ENCODE measurements at regions of chr11 and their contacts with region 1.

Region 1: DNA sequence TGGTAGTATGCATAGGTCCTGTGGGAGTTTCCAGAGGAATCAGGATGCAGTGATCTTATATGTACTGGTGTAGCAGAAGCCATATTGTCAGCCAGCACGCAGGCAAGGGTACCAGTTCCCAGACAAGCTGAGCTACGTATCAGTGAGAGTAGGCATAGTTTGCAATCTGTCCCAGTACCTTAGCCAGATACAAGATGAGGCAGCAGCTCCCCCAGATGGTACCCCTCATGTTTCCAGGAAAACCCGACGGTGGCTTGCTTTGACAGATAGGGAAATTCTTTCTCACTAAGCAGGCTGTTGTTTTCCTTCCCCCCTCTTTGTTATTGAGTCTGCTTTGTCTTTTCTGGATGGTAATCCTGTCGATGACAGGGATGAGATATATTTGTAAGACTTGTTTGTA is 109.7 kb upstream of the RRM1 start:
- DNase-seq: peak in 8 of 9 donors; percentile 23 to 55 (median 36)
- ATAC-seq: peak; percentile 69
- H3K4me3 ChIP-seq: no peak overlapping the region
- H3K4me3 Mint-ChIP-seq: peak overlapping the region in 8 of 10 donors; percentile 1 to 43 (median 3)
- H3K27ac ChIP-seq: peak overlapping the region; percentile 5
- H3K27ac Mint-ChIP-seq: peak overlapping the region in 8 of 9 donors; percentile 26 to 90 (median 82)
- H3K4me1 ChIP-seq: peaks cover 20 to 45% of the 10 kb centered on the region in 2 donors
- H3K4me1 Mint-ChIP-seq: peaks cover 53 to 99% (median 93%) of the 10 kb centered on the region in 7 donors
- H3K27me3 ChIP-seq: no peaks in the 10 kb centered on the region
- H3K27me3 Mint-ChIP-seq: no peaks in the 10 kb centered on the region

Region 2: DNA sequence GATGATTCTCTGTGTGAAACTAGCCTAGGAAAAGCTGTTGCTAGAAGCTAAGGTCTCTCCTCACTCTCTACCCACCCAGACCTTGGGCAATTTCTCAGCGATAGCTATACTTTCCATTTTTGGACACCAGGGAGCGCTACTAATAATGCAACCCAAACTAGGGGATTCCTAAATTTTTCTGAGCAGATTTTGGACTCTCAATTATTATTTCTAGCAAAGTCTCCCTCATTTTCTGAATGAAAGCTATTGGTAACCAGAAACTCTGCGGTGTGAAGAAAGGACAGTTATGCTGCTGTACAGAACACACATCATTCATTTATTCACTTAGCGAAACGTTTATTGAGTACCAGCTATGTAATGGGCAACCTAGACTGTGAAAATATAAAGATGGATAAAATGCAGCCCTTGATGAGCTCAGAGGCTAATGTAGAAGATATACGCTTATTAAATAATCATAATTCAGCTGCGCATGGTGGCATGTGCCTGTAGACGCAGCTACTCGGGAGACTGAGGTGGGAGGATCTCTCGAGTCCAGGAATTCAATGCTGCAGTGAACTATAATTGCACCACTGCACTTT is 135.5 kb before region 1 on chr11:
- CTCF ChIA-PET with region 1: interaction called, 45 read pairs
- POLR2A ChIA-PET with region 1: interaction called, 22 read pairs
- intact Hi-C with region 1: loop called (anchors 1 kb)
- DNase-seq: peak in 7 of 9 donors; percentile 45 to 72 (median 62)
- ATAC-seq: peak; percentile 82
- H3K4me3 ChIP-seq: no peak overlapping the region
- H3K4me3 Mint-ChIP-seq: no peak overlapping the region
- H3K27ac ChIP-seq: no peak overlapping the region
- H3K27ac Mint-ChIP-seq: peak overlapping the region in 8 of 9 donors; percentile 7 to 80 (median 62)
- H3K4me1 ChIP-seq: peaks cover 20 to 33% of the 10 kb centered on the region in 2 donors
- H3K4me1 Mint-ChIP-seq: peaks cover 28 to 61% (median 42%) of the 10 kb centered on the region in 7 donors
- H3K27me3 ChIP-seq: no peaks in the 10 kb centered on the region
- H3K27me3 Mint-ChIP-seq: no peaks in the 10 kb centered on the region

Region 3: GRCh38 chr11:3927133-3927796 is 57.6 kb before region 1 on chr11:
- CTCF ChIA-PET with region 1: interaction called, 6 read pairs
- POLR2A ChIA-PET with region 1: no interaction called
- intact Hi-C with region 1: loop called in 1 of 2 experiments (anchors 1 kb)
- DNase-seq: no peak
- ATAC-seq: no peak
- H3K4me3 ChIP-seq: no peak overlapping the region
- H3K4me3 Mint-ChIP-seq: no peak overlapping the region
- H3K27ac ChIP-seq: no peak overlapping the region
- H3K27ac Mint-ChIP-seq: peak overlapping the region in 7 of 9 donors; percentile 10 to 86 (median 52)
- H3K4me1 ChIP-seq: peaks cover 0 to 4% of the 10 kb centered on the region in 2 donors
- H3K4me1 Mint-ChIP-seq: peaks cover 23 to 61% (median 58%) of the 10 kb centered on the region in 7 donors
- H3K27me3 ChIP-seq: no peaks in the 10 kb centered on the region
- H3K27me3 Mint-ChIP-seq: no peaks in the 10 kb centered on the region

Region 4: GRCh38 chr11:3947061-3947460 is 37.8 kb before region 1 on chr11:
- CTCF ChIA-PET with region 1: interaction called, 7 read pairs
- POLR2A ChIA-PET with region 1: interaction called, 6 read pairs
- intact Hi-C with region 1: loop called (anchors 2 kb)
- DNase-seq: peak in 8 of 9 donors; percentile 36 to 86 (median 80)
- ATAC-seq: peak; percentile 88
- H3K4me3 ChIP-seq: peak overlapping the region; percentile 44
- H3K4me3 Mint-ChIP-seq: peak overlapping the region; percentile 52 to 88 (median 80)
- H3K27ac ChIP-seq: peak overlapping the region; percentile 65
- H3K27ac Mint-ChIP-seq: peak overlapping the region; percentile 93 to 99 (median 97)
- H3K4me1 ChIP-seq: peaks cover 93 to 95% of the 10 kb centered on the region in 2 donors
- H3K4me1 Mint-ChIP-seq: peaks cover 84 to 98% (median 97%) of the 10 kb centered on the region in 7 donors
- H3K27me3 ChIP-seq: no peaks in the 10 kb centered on the region
- H3K27me3 Mint-ChIP-seq: no peaks in the 10 kb centered on the region

Region 5: DNA sequence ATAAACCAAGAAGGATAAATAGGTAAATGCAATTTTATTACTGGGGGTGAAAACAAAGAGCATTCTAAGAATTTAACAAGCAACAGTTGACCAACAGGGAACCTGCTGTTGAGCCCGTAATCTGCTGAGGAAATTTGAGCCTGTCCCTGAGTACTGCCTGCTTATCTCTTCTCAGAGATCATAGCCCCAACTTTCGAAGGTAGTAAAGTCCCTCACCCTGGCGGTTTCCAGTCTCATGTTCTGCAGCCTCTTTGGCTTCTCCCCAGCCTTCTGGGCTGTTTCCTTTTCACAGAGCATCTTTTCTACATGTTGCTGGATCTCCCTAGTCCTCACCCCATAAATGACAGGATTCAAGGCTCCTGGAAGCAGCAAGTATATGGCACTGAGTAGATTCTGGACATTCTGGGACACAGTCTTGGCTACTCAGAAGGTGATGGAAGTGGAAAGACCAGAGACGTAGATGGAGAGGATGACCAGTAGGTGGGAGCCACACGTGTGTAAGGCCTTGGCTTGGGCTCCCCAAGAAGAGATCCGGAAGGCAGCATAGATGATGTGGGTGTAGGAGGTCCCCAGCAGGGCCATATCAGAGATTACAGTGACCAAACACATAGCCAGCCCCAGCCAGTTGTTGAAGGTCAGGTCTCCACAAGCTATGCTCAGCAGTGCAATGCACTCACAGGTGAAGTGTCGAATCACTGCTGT is 161.3 kb after region 1 on chr11:
- CTCF ChIA-PET with region 1: no interaction called
- POLR2A ChIA-PET with region 1: no interaction called
- intact Hi-C with region 1: no loop called
- DNase-seq: no peak
- ATAC-seq: no peak
- H3K4me3 ChIP-seq: no peak overlapping the region
- H3K4me3 Mint-ChIP-seq: no peak overlapping the region
- H3K27ac ChIP-seq: no peak overlapping the region
- H3K27ac Mint-ChIP-seq: no peak overlapping the region
- H3K4me1 ChIP-seq: no peaks in the 10 kb centered on the region
- H3K4me1 Mint-ChIP-seq: peaks cover 0 to 2% (median 0%) of the 10 kb centered on the region in 7 donors
- H3K27me3 ChIP-seq: no peaks in the 10 kb centered on the region
- H3K27me3 Mint-ChIP-seq: no peaks in the 10 kb centered on the region